ENCODE measurements at regions of chr1 and their contacts with region 1.

Region 1: GRCh38 chr1:232635778-232636356 is 5.9 kb upstream of the SIPA1L2 start:
- DNase-seq: no peak
- H3K4me3 Mint-ChIP-seq: no peak overlapping the region
- H3K27ac Mint-ChIP-seq: no peak overlapping the region
- H3K4me1 Mint-ChIP-seq: peaks cover 4% of the 10 kb centered on the region
- H3K27me3 Mint-ChIP-seq: peaks cover 28% of the 10 kb centered on the region

Region 2: DNA sequence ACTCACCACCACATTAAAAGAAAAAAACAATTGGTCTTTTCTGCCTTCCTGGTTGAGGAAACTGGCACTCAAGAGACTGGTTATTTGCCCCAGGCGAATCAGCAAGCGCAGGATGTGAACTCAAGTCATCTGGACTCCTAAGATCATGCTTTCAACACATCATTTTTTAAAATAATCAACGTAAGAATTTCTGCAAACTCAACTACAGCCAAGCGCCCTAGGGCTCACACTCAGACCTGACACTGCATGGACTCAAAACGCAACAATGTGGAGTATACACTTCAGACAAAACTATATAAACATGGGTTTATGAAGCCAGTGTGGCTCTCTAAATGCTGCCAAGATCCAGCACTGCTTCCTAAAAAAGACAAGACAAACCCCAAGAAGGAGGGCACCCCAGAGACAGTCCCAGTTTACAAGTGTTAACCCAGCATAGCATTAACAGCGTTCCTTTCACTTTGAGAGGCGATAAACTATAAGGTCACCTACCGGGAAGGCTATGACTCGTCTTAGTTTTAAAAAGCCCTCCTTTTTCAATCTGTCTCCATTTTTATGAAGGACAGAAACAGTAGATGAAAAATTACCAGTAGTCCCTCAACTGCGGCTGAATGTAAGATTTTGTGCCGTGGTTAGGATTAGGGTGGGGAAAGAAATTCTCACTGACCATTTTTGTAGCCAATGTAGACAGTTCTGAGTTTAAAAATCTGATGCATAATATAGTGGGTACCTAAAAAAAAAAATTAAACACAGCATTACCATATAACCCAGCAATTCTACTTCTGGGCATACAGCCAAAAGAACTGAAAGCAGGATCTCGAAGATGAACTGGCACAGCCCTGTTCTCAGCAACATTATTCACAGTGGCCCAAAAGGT is 60.7 kb before region 1 on chr1:
- intact Hi-C with region 1: no loop called
- DNase-seq: no peak
- H3K4me3 Mint-ChIP-seq: no peak overlapping the region
- H3K27ac Mint-ChIP-seq: no peak overlapping the region
- H3K4me1 Mint-ChIP-seq: peaks cover 31% of the 10 kb centered on the region
- H3K27me3 Mint-ChIP-seq: no peaks in the 10 kb centered on the region

Region 3: DNA sequence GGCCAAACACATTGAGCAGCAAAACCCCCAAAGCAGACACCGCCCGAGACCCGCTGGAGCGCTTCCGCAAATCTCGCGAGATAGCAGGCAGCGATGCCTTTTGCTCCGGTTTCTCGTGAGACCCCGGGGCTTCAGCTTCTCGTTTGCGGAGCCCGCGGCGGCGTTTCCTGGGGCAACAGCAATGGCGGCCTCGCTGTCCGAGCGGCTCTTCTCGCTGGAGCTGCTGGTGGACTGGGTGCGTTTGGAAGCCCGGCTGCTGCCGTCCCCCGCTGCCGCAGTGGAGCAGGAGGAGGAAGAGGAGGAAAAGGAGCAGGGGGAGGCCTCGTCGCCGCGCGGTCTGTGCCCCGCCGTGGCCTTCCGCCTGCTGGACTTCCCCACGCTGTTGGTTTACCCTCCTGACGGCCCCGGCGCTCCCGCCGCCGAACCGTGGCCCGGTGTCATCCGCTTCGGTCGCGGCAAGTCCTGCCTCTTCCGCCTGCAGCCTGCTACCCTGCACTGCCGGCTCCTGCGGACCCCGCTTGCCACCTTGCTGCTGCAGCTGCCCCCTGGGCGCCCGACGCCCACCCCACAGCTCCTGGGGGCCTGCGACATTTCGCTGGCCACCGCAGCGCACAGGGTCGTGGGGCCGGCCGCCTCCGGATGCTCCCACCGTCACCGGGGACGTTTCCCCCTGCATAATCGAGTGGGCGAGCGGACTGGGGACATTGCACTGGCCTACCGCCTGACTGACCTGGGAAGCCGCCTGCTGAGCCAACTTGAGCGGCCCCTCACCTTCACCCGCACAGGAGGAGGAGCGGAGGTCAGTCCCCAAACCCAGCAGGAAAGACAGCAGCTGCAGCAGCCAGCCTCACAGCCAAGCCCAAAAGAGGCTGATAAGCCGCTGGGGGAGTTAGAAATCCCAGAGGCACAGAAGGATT is 169.7 kb after region 1 on chr1 and contains the start of gene MAP10:
- intact Hi-C with region 1: loop called (anchors 5 kb)
- DNase-seq: peak; percentile 94
- H3K4me3 Mint-ChIP-seq: peak within 1 kb of the TSS; percentile 91
- H3K27ac Mint-ChIP-seq: peak within 1 kb of the TSS; percentile 86
- H3K4me1 Mint-ChIP-seq: peaks cover 27% of the 10 kb centered on the region
- H3K27me3 Mint-ChIP-seq: peaks cover 10% of the 10 kb centered on the region
- total RNA-seq, gene MAP10: 2.6 and 2.7 TPM in 2 replicates

Region 4: GRCh38 chr1:233025157-233025915 is 389.5 kb after region 1 on chr1:
- intact Hi-C with region 1: loop called (anchors 2 kb)
- DNase-seq: peak; percentile 67
- H3K4me3 Mint-ChIP-seq: no peak overlapping the region
- H3K27ac Mint-ChIP-seq: no peak overlapping the region
- H3K4me1 Mint-ChIP-seq: no peaks in the 10 kb centered on the region
- H3K27me3 Mint-ChIP-seq: no peaks in the 10 kb centered on the region

Region 5: DNA sequence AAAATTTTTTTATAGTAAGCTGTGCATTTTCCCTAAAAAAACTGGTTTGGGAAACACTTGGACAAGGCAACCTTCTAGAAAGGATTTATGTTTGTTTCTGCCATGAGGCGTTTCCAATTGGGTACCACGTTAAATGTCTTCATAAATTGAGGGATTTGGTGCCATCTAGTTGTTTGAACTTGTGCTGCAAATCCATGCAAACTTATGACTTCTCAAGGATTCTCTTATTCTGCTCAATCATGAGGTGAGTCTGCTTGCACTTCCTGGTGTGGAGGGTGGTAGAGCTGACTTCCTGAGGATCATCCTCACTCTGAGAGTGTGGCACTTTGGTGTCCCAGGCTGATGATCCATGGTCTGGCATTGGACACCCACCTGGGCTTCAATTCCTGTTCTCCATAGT is 536.4 kb after region 1 on chr1:
- intact Hi-C with region 1: loop called (anchors 2 kb)
- DNase-seq: no peak
- H3K4me3 Mint-ChIP-seq: no peak overlapping the region
- H3K27ac Mint-ChIP-seq: no peak overlapping the region
- H3K4me1 Mint-ChIP-seq: no peaks in the 10 kb centered on the region
- H3K27me3 Mint-ChIP-seq: no peaks in the 10 kb centered on the region

Region 6: GRCh38 chr1:233240829-233241682 is 605.2 kb after region 1 on chr1:
- intact Hi-C with region 1: loop called (anchors 2 kb)
- DNase-seq: peak; percentile 74
- H3K4me3 Mint-ChIP-seq: no peak overlapping the region
- H3K27ac Mint-ChIP-seq: no peak overlapping the region
- H3K4me1 Mint-ChIP-seq: peaks cover 9% of the 10 kb centered on the region
- H3K27me3 Mint-ChIP-seq: no peaks in the 10 kb centered on the region

Measured in activated CD4-positive, alpha-beta T cell treated with anti-CD3 and anti-CD28 coated beads, Interleukin-2, amount 10 ng/mL, durations not matched to agents 24 days and 14 days (primary cell).